ENCODE measurements at regions of chr9 and their contacts with region 1.

Region 1: GRCh38 chr9:10212702-10213101 is 400.1 kb downstream of the PTPRD start:
- DNase-seq: no peak
- ATAC-seq: no peak

Region 2: DNA sequence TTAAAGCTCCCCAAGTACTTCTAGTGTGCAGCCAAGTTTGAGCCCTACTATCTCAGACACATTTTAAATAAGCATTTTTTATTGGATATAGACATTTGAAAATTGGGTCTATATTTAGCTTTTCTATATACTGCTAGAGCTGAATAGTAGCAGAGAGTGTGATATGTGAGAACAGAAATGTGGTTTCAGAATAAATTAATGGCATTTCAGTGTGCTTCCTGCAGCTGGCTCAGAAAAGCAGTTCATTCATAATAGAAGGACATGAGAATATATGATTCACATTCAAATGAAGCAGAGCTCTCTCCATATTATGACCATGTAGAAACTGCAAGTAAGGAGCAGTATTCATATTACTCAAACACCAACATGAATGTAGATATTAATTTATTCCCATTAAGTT is 63.9 kb before region 1 on chr9:
- intact Hi-C with region 1: loop called (anchors 5 kb)
- DNase-seq: no peak
- ATAC-seq: no peak

Region 3: DNA sequence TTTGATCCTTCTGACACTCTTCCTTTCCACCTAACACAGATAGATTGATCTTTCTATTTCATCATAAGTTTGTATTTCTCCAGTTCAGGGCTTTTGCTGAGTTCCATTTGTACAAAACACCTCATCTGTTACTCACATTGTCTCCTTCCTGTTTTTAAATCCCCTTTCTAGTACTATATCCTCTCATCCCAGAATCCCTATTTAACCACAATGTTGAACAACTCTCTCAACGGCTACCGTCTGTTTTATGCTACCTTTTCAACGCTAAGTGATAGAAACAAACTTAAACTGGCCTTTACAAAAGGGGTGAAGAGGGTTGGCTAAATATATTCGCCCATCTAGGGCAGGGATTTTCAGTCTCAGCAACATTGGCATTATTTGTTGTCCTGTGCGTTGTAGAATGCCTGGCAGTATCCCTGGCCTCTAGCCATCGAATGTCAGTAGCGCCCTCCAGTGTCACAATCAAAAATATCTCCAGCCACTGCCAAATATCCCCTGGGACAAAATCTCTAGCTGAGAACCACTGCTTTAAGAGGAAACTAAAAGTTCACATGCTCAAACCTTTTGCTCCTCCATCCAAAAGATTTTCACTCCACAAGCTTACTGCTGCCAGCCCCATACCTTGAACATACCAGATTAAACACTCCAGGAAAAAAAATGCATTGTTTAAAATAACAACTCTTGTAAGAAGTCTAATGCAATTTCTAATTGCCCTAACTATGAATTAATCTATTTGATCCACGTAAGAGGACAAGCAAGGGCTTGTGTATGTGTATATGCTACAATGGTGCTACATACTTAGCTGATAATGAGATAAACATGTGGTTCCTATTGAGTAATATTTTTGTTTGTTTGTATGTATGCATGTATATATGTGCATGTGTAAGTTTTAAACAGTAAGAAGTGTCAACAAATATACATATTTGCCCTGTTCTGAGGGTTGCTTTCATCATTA is 56.1 kb after region 1 on chr9:
- intact Hi-C with region 1: loop called (anchors 2 kb)
- DNase-seq: no peak
- ATAC-seq: peak; percentile 68